Mammary epithelial cell (primary cell): ENCODE measurements at regions of chr17 and their contacts with region 1.

Region 1: GRCh38 chr17:56172517-56172982 is 19.3 kb downstream of the ANKFN1 start:
- DNase-seq: no peak
- H3K4me3 ChIP-seq: no peak overlapping the region
- H3K27ac ChIP-seq: no peak overlapping the region
- H3K4me1 ChIP-seq: no peaks in the 10 kb centered on the region
- H3K27me3 ChIP-seq: peaks cover 2% of the 10 kb centered on the region
- CTCF ChIP-seq: no peak

Region 2: DNA sequence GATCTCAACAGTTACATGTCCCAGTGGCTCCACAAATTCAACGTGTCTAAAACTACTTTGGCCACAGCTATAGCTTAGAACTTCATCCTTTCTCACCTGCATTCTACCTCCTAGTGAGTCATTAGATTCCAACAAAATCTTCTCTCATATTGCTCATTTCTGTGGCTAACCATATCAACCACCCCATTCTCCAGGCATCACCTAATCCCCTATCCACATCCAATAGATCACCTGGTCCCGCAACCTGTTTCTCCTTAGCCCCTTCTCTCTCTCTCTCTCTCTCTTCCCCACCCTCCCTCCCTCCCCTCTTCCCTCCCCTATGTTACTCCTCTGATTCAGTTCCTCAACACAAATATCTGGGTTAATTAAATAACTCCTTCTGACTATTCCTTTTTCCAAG is 45.4 kb after region 1 on chr17:
- CTCF ChIA-PET with region 1: no interaction called
- dilution Hi-C with region 1: loop called (anchors 5 kb)
- in situ Hi-C with region 1: no loop called
- intact Hi-C with region 1: no loop called
- DNase-seq: peak; percentile 65
- H3K4me3 ChIP-seq: no peak overlapping the region
- H3K27ac ChIP-seq: no peak overlapping the region
- H3K4me1 ChIP-seq: peaks cover 10% of the 10 kb centered on the region
- H3K27me3 ChIP-seq: peaks cover under 1% of the 10 kb centered on the region
- CTCF ChIP-seq: no peak

Region 3: GRCh38 chr17:56367366-56367765 is 194.8 kb after region 1 on chr17:
- CTCF ChIA-PET with region 1: no interaction called
- dilution Hi-C with region 1: no loop called
- in situ Hi-C with region 1: no loop called
- intact Hi-C with region 1: no loop called
- DNase-seq: no peak
- H3K4me3 ChIP-seq: no peak overlapping the region
- H3K27ac ChIP-seq: no peak overlapping the region
- H3K4me1 ChIP-seq: no peaks in the 10 kb centered on the region
- H3K27me3 ChIP-seq: peaks cover 1% of the 10 kb centered on the region
- CTCF ChIP-seq: no peak